CD14-positive monocyte (primary cell): ENCODE measurements at regions of chr2 and their contacts with region 1.

Region 1: DNA sequence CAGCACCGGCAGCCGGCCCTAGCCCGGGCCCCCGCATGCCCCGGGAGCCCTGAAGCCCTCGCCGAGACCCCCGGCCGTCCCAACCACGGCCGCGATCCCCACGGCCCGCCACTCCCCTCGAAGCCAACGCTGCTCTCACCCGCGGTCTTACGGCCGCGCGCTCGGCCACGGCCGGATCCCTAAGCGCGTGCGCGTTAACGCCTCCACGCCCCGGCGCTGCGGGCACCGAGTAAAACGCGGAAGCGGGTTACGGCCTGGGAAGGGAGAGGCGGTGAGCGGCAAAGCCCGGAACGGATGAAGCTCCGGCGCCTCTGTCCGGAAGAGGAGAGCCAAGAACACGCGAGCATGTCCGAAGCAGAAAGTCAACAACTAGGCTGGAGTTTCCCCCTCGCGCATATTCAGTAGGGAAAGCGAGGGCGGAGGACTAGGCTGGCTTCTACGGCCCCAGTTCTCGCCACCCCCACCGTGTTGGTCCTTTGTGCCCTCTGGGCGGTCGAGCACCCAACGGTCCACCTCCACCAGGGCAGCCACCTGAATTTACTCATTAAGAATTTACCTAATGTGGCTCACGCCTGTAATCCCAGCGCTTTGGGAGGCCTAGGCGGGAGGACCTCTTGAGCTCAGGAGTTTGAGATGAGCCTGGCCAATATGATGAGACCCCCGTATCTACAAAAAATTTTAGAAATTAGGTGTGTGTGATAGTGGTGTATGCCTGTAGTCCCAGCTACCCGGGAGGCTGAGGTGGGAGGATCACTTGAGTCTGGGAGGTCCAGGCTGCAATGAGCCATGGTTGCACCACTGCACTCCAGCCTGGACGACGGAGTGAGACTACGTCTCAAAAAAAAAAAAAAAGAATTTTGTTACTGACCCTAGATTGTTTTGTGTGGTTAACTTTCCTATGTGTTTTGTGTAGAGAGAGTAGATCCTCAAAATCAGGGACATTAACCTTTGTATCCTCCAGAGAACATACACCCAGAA is at the start of gene KANSL3:
- DNase-seq: peak; percentile 92 to 95 (median 95)
- H3K4me3 ChIP-seq: peak within 1 kb of the TSS; percentile 61 to 83 (median 64)
- H3K4me3 Mint-ChIP-seq: peak within 1 kb of the TSS; percentile 93 to 97
- H3K27ac ChIP-seq: peak within 1 kb of the TSS; percentile 87 to 88
- H3K27ac Mint-ChIP-seq: peak within 1 kb of the TSS; percentile 97 to 99 (median 98)
- H3K4me1 ChIP-seq: peaks cover 23 to 37% of the 10 kb centered on the region in 2 donors
- H3K4me1 Mint-ChIP-seq: peaks cover 36% of the 10 kb centered on the region
- H3K27me3 ChIP-seq: no peaks in the 10 kb centered on the region
- H3K27me3 Mint-ChIP-seq: peaks cover 2 to 7% (median 4%) of the 10 kb centered on the region in 3 donors
- CTCF ChIP-seq: no peak
- polyA plus RNA-seq, gene KANSL3: 2.5 to 25.3 (median 7.2) TPM

Region 2: DNA sequence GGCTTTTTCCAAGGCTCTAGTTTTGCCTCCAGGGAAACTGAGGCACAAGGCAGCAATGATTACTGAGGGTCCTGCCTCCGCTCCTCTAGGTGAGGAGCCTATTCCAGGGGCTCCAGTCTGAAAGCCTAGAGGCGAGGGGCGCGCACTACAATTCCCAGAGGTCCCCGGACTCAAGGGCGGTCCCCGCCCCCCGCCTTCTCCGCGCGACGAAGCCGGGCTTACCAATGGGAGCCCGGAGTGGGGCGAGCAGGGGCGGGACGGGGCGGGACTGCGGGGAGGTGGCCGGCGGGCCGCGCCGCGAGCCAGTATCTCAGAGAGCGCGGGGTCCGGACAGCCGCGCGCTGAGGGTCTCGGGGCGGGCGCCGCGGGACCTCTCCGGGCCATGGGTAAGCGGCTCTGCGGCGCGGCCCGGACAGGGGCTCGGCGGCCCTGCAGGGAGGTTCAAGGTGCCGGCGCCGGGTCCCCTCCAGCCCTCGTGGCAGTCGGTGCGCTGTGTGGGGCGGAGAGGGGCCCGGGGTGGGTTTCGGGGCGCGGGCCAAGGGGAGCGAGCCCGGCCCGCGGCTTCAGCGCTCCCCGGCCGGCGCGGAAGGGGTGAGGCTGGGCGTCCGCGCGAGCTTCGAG is 101.9 kb before region 1 on chr2 and contains the start of gene ARID5A:
- intact Hi-C with region 1: loop called in 1 of 2 experiments (anchors 5 kb)
- DNase-seq: peak; percentile 84 to 89 (median 86)
- H3K4me3 ChIP-seq: peak within 1 kb of the TSS; percentile 71 to 88 (median 72)
- H3K4me3 Mint-ChIP-seq: peak within 1 kb of the TSS; percentile 95 to 96
- H3K27ac ChIP-seq: peak within 1 kb of the TSS; percentile 92 to 94
- H3K27ac Mint-ChIP-seq: peak within 1 kb of the TSS; percentile 94 to 97 (median 97)
- H3K4me1 ChIP-seq: peaks cover 65 to 83% of the 10 kb centered on the region in 2 donors
- H3K4me1 Mint-ChIP-seq: peaks cover 63% of the 10 kb centered on the region
- H3K27me3 ChIP-seq: no peaks in the 10 kb centered on the region
- H3K27me3 Mint-ChIP-seq: peaks cover 0 to 5% (median 2%) of the 10 kb centered on the region in 3 donors
- CTCF ChIP-seq: peak; percentile 62
- polyA plus RNA-seq, gene ARID5A: 27.8 to 38.8 (median 37.7) TPM

Region 3: GRCh38 chr2:96656540-96656939 is 18.1 kb after region 1 on chr2:
- intact Hi-C with region 1: loop called in 1 of 2 experiments (anchors 2 kb)
- DNase-seq: peak; percentile 47 to 59 (median 50)
- H3K4me3 ChIP-seq: peak overlapping the region in 1 of 3 experiments; percentile 38
- H3K4me3 Mint-ChIP-seq: no peak overlapping the region
- H3K27ac ChIP-seq: peak overlapping the region; percentile 67 to 81
- H3K27ac Mint-ChIP-seq: peak overlapping the region; percentile 87 to 95 (median 93)
- H3K4me1 ChIP-seq: peaks cover 34 to 36% of the 10 kb centered on the region in 2 donors
- H3K4me1 Mint-ChIP-seq: peaks cover 33% of the 10 kb centered on the region
- H3K27me3 ChIP-seq: no peaks in the 10 kb centered on the region
- H3K27me3 Mint-ChIP-seq: no peaks in the 10 kb centered on the region
- CTCF ChIP-seq: no peak

Region 4: GRCh38 chr2:96739633-96740428 is 101.4 kb after region 1 on chr2 and contains the start of gene LMAN2L:
- intact Hi-C with region 1: loop called (anchors 5 to 10 kb)
- DNase-seq: peak; percentile 92 to 98 (median 95)
- H3K4me3 ChIP-seq: peak within 1 kb of the TSS; percentile 88 to 94 (median 90)
- H3K4me3 Mint-ChIP-seq: peak within 1 kb of the TSS; percentile 98
- H3K27ac ChIP-seq: peak within 1 kb of the TSS; percentile 0 to 79
- H3K27ac Mint-ChIP-seq: peak within 1 kb of the TSS; percentile 90 to 99 (median 97)
- H3K4me1 ChIP-seq: peaks cover 22 to 33% of the 10 kb centered on the region in 2 donors
- H3K4me1 Mint-ChIP-seq: peaks cover 29% of the 10 kb centered on the region
- H3K27me3 ChIP-seq: no peaks in the 10 kb centered on the region
- H3K27me3 Mint-ChIP-seq: peaks cover 0 to 1% (median 0%) of the 10 kb centered on the region in 3 donors
- CTCF ChIP-seq: no peak
- polyA plus RNA-seq, gene LMAN2L: 7.9 to 22.4 (median 16.6) TPM

Region 5: DNA sequence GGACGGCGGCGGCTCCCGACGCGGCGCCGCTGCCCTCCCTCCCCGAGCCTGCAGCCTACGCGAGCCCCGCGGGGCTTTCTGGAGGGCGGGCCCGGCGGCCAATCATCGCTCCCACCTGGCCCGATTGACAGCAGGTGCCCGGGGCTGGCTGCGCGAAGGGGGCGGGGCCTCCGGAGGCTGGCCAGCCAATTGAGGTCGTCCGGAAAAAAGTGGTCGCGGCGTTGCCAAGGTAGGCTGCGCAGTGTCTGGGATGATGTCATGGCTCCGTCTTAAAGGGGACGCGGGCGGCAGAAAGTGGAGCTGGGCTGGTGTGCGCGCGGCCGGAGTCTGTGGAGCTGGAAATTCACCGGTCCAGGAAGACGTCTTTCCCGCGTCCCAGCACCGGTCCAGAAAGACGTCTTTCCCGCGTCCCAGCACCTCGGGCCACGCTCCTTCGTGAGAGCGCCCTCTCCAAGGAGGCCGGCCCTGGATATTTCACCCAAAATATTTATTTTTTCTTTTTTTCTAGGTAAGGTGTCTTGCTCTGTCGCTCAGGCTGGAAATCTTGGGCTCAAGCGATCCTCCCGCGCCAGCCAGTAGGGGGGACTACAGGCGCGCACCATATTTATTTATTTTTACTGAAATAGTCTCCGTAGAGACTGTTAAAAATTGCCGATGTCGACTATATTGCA is 1025.7 kb after region 1 on chr2 and contains the start of gene ACTR1B:
- intact Hi-C with region 1: loop called in 1 of 2 experiments (anchors 10 kb)
- DNase-seq: peak; percentile 88 to 95 (median 93)
- H3K4me3 ChIP-seq: peak within 1 kb of the TSS; percentile 63 to 84 (median 75)
- H3K4me3 Mint-ChIP-seq: peak within 1 kb of the TSS; percentile 89 to 94
- H3K27ac ChIP-seq: peak within 1 kb of the TSS; percentile 92 to 94
- H3K27ac Mint-ChIP-seq: peak within 1 kb of the TSS; percentile 92 to 98 (median 96)
- H3K4me1 ChIP-seq: peaks cover 20 to 23% of the 10 kb centered on the region in 2 donors
- H3K4me1 Mint-ChIP-seq: peaks cover 36% of the 10 kb centered on the region
- H3K27me3 ChIP-seq: no peaks in the 10 kb centered on the region
- H3K27me3 Mint-ChIP-seq: peaks cover 0 to 4% (median 2%) of the 10 kb centered on the region in 3 donors
- CTCF ChIP-seq: peak; percentile 57
- polyA plus RNA-seq, gene ACTR1B: 8.9 to 64.4 (median 9.9) TPM